ENCODE measurements at regions of chr21 and their contacts with region 1.

Region 1: GRCh38 chr21:43975495-43975993 is 36.6 kb upstream of the TRAPPC10 start:
- DNase-seq: peak; percentile 87
- H3K4me3 Mint-ChIP-seq: no peak overlapping the region
- H3K27ac Mint-ChIP-seq: peak overlapping the region; percentile 18
- H3K4me1 Mint-ChIP-seq: peaks cover 6% of the 10 kb centered on the region
- H3K27me3 Mint-ChIP-seq: no peaks in the 10 kb centered on the region

Region 2: GRCh38 chr21:43789276-43790009 is 186.1 kb before region 1 on chr21 and contains the start of gene RRP1:
- CTCF ChIA-PET with region 1: interaction called, 10 read pairs
- POLR2A ChIA-PET with region 1: no interaction called
- intact Hi-C with region 1: no loop called
- DNase-seq: peak; percentile 94
- H3K4me3 Mint-ChIP-seq: peak within 1 kb of the TSS; percentile 97
- H3K27ac Mint-ChIP-seq: peak within 1 kb of the TSS; percentile 84
- H3K4me1 Mint-ChIP-seq: peaks cover 24% of the 10 kb centered on the region
- H3K27me3 Mint-ChIP-seq: no peaks in the 10 kb centered on the region
- total RNA-seq, gene RRP1: 42.7 to 47.8 TPM

Region 3: DNA sequence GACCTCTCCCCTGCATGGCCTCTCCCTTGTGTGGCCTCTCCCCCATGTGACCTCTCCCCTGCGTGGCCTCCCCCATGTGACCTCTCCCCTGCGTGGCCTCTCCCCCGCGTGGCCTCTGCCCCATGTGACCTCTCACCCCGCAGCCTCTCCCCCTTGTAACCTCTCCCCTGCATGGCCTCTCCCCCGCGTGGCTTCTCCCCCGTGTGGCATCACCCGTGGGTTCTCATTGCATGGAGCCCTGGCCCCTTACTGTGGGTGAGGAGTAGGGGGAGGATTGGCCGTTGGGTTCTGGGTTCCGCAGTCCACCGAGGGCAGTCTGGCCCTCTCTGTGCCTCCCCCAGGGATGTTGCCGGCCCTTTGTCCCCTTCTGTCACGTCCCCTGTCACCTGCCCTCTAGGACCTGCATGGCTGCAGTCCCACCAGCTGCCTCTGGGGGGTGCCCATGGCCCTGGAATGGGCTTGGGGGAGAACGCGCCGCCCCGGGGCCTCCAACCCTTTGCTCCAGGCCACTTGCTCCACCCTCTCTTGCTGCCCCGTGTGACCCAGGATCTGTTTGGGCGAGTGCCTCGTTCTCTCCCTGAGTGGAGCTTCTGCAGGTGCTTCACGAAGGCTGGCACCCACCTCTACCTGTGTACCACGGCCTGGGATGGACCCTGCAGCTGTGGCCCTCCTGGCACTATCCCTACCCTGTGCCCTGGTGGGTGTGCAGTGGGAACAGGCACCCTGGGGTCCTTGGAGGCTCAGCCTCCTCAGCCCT is 164.9 kb before region 1 on chr21:
- CTCF ChIA-PET with region 1: interaction called, 6 read pairs
- POLR2A ChIA-PET with region 1: interaction called, 3 read pairs
- intact Hi-C with region 1: loop called (anchors 1 kb)
- DNase-seq: peak; percentile 93
- H3K4me3 Mint-ChIP-seq: no peak overlapping the region
- H3K27ac Mint-ChIP-seq: no peak overlapping the region
- H3K4me1 Mint-ChIP-seq: peaks cover 7% of the 10 kb centered on the region
- H3K27me3 Mint-ChIP-seq: no peaks in the 10 kb centered on the region

Region 4: GRCh38 chr21:44092211-44092610 is 116.7 kb after region 1 on chr21:
- CTCF ChIA-PET with region 1: no interaction called
- POLR2A ChIA-PET with region 1: no interaction called
- intact Hi-C with region 1: no loop called
- DNase-seq: no peak
- H3K4me3 Mint-ChIP-seq: no peak overlapping the region
- H3K27ac Mint-ChIP-seq: no peak overlapping the region
- H3K4me1 Mint-ChIP-seq: peaks cover 40% of the 10 kb centered on the region
- H3K27me3 Mint-ChIP-seq: no peaks in the 10 kb centered on the region